HEK293 (cell line): ENCODE measurements at regions of chr4 and their contacts with region 1.

Region 1: DNA sequence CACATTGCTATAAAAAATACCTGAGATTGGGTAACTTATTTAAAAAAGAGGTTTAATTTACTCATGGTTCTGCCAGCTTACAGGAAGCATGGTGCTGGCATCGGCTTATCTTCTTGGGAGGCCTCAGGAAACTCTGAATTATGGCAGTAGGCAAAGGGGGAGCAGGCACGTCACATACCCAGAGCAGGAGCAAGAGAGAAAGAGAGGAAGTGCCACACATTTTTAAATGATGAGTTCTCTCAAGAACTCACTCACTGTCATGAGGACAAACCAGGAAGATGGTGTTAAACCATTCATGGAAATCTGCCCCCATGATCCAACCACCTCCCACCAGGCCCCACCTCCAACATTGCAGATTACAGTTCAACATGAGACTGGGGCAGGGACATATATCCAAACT is 10.0 kb upstream of the AFF1 start:
- H3K4me3 ChIP-seq: no peak overlapping the region
- H3K27ac ChIP-seq: no peak overlapping the region
- H3K4me1 ChIP-seq: no peaks in the 10 kb centered on the region
- CTCF ChIP-seq: no peak

Region 2: GRCh38 chr4:86870442-86871069 is 54.3 kb before region 1 on chr4:
- CTCF ChIA-PET with region 1: no interaction called
- POLR2A ChIA-PET with region 1: no interaction called
- H3K4me3 ChIP-seq: no peak overlapping the region
- H3K27ac ChIP-seq: no peak overlapping the region
- H3K4me1 ChIP-seq: no peaks in the 10 kb centered on the region
- CTCF ChIP-seq: no peak

Region 3: DNA sequence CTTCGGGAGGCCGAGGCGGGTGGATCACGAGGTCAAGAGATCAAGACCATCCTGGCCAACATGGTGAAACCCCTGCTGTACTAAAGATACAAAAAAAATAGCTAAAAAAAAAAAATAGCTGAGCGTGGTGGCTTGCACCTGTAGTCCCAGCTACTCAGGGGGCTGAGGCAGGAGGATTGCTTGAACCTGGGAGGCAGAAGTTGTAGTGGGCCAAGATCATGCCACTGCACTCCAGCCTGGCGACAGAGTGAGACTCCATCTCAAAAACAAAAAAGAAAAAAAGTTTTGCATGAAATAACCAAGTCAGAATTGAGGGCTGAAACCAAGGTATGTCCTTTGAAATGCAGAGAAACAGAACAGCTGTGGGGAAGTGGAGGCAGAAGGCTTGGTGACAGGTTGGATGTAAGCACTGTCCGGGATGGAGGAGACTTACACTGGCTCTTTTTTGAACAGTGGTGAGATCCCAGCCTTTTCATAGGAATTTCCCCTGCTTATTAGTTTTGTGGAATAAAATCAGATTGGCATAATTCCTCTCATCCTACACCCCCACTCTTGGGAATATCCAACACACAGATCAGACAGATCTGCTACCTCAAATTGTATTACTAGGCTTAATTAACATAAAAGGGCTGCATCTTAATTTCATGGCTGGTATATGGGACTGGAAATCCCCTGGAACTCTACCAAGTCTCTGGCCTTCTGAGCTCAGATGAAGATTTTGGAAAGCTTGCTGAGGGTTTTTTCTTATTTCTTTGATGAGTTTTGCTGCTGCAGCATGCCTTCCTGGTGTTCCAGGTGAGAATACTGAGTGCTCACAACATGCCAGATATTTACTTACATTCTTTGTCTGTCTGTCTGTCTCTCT is 13.8 kb before region 1 on chr4:
- CTCF ChIA-PET with region 1: interaction called, 25 read pairs
- POLR2A ChIA-PET with region 1: no interaction called
- H3K4me3 ChIP-seq: no peak overlapping the region
- H3K27ac ChIP-seq: no peak overlapping the region
- H3K4me1 ChIP-seq: no peaks in the 10 kb centered on the region
- CTCF ChIP-seq: no peak

Region 4: DNA sequence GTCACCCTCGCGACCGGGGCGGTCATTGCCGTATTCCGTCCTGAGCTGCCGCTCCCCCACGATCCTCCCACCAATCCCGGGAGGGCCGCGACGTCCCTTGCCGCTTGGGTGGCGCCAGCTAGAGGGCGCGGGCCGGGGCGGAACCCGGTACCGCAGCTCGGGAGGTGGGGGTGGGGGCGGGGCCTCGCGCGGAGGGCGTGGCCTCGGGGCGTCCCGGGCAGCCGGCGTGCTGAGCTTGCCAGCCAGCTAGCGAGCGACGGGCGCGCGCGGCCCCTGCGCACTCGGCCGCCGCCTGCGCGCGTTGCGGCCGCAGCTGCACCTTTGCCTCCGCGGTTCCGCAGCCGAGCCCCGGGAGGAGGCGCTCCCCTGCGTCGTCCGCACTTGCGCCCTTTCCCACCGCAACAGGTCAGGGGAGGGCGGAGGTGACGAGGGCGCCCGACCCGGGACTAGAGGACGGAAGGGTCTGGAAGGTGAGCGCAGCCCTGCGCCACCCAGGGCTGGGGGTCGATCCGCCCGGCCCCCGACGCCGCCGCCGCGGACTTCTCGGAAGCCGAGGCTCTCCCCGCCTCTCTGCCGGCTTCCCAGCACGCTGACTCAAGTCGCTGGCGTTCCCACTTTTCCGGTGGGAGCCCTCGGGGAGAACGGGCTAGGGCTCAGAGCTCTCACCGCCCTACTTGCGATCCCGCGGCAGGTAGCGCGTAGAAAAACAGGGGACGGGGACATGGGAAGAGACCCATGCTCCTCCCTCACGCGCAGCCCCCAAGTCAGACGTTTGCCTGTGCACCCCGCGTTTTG is 10.2 kb after region 1 on chr4 and contains the start of gene AFF1:
- CTCF ChIA-PET with region 1: interaction called, 18 read pairs
- POLR2A ChIA-PET with region 1: interaction called, 10 read pairs
- H3K4me3 ChIP-seq: peak within 1 kb of the TSS; percentile 67
- H3K27ac ChIP-seq: peak within 1 kb of the TSS; percentile 88
- H3K4me1 ChIP-seq: peaks cover 4% of the 10 kb centered on the region; the same call in 1 of the 2 replicates
- CTCF ChIP-seq: peak; percentile 72

Region 5: GRCh38 chr4:87006676-87007527 is 82.1 kb after region 1 on chr4:
- CTCF ChIA-PET with region 1: interaction called, 18 read pairs
- POLR2A ChIA-PET with region 1: interaction called, 17 read pairs
- H3K4me3 ChIP-seq: peak overlapping the region; percentile 58
- H3K27ac ChIP-seq: peak overlapping the region; percentile 95
- H3K4me1 ChIP-seq: peaks cover 3% of the 10 kb centered on the region; the same call in 1 of the 2 replicates
- CTCF ChIP-seq: peak; percentile 46; the same call in 1 of the 2 replicates

Region 6: DNA sequence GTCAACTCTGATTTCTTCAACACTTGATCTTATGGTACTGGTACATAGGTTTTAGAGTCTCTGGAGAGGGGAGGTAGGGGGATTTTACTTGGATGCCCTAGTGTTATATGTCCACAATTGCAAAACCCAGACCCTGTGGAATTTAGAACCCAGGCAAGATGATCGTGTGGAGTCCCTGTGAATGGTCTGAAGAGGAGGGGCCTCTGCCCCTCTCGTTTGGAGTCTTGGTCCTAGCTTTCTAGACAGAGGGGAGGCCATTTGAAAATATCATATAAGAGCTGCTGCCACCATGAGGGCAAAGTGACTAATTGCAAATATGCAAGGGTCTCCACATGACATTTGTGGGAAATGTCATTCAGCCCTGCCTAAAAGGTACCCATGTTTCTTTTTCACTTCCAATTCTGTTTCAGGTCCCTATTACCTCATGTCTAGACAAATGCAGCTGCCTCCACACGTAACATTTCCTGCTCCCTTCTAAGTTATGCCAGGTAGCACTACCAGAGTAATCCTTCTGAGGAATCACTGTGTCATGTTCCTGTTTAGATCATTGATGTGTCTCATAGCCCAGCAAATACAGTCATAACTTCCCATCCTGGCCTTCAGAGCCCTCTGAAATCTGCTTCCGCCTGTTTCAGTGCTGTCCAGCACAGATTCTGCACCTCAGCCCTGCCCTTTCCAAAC is 168.8 kb after region 1 on chr4:
- CTCF ChIA-PET with region 1: interaction called, 74 read pairs
- POLR2A ChIA-PET with region 1: no interaction called
- H3K4me3 ChIP-seq: no peak overlapping the region
- H3K27ac ChIP-seq: no peak overlapping the region
- H3K4me1 ChIP-seq: peaks cover 5% of the 10 kb centered on the region; the same call in 1 of the 2 replicates
- CTCF ChIP-seq: no peak

Region 7: DNA sequence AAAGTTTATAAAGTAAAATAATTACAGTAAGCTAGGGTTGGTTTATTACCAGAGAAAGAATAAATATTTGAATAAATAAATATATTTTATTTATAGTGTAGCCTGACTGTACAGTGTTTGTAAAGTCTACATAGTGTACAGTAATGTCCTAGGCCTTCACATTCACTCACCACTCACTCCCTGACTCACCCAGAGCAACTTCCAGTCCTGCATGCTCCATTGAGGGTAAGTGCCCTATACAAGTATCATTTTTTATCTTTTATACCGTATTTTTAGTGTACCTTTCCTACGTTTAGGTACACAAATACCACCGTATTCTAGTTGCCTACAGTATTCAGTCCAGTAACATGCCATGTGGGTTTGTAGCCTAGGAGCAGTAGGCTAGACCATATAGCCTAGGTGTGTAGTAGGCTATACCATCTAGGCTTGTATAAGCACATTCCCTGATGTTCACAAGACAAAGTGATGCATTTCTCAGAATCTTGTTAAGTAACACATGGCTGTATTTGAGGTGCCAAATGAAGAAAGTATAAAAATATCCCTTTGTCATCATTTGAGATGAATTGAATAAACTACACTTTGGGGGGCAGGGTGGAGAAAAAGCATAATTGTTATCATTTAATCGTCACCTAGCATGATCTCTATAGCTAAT is 310.3 kb after region 1 on chr4:
- CTCF ChIA-PET with region 1: interaction called, 11 read pairs
- POLR2A ChIA-PET with region 1: no interaction called
- H3K4me3 ChIP-seq: no peak overlapping the region
- H3K27ac ChIP-seq: no peak overlapping the region
- H3K4me1 ChIP-seq: no peaks in the 10 kb centered on the region
- CTCF ChIP-seq: no peak